ENCODE measurements at regions of chr9 and their contacts with region 1.

Region 1: DNA sequence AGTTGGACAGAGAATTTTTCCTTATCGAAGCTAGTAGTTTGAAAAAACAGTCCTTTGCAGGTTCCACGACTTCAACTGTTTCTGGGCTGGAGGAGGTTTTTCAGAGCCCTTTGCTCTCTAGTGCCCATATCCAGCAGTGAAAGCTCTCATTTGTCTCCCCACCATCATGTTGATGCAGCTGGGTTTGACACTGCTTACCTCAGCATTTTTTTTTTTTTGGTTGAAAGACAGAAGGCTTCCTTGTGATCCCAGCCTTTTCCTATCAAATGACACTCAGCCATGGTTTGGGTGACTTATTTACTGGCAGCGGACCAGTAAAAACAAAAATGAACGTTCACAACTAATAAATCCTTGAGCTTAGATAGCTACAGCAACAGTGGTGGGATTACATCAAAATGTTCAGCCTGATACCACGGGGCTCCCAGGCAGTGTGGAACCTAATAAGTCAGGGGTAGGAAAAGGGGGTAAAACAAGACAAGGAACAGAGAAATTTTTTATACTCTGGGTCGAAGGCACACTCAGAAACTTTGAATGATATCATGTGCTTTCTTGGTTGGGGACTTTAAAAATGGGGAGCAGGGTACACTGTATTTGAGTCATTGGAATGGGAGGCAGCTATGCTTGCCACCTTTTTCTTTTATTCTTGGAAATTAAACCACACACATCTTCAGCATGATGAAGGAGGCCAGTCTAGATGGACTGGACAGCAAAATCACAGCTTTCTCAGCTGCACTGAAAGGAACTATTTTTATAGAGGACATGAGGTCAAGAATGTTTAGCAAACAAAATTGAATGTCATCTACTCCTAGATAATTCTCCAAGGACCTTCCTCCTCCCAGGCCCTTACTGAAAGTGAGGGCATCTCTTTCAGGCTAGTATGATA is 308.9 kb upstream of the MPDZ start:
- DNase-seq: no peak
- ATAC-seq: peak; percentile 49
- H3K4me3 ChIP-seq: no peak overlapping the region
- H3K27ac ChIP-seq: no peak overlapping the region
- H3K4me1 ChIP-seq: peaks cover 0 to 3% of the 10 kb centered on the region in 2 donors
- H3K27me3 ChIP-seq: no peaks in the 10 kb centered on the region

Region 2: DNA sequence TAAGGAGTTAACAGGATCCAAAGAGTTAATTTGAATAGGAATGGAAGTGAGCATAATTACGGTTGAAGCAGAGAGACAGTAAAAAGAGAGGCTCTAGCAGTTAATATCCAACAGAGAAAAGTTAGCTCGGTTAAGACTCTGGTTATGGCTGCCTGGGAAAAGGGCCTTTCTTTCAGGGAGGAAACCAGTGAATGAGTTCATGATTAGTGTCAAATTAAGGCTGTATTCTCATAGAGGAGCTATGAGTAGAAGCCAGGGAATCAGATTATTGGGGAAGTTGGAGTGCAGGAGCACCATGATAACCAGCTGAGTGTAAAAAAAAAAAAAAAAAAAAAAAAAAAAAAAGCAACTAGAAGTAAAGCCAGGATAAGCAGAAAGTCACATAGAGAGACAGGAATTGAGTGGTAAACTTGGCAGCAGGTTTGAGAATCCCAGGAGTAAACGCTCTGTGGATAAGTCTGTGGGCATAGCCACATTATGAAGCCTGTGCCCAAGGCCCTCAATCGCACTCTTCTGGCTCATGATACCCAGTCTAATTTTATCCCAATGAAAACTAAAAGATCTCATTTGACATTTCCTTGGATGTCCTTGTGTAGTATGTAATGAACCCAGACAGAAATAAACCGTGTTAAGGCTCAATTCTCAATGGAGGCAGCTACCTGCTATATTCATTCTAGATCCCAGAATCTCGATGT is 63.7 kb after region 1 on chr9:
- intact Hi-C with region 1: loop called in 1 of 2 experiments (anchors 10 kb)
- DNase-seq: peak in 1 of 2 donors; percentile 54
- ATAC-seq: peak; percentile 83
- H3K4me3 ChIP-seq: no peak overlapping the region
- H3K27ac ChIP-seq: no peak overlapping the region
- H3K4me1 ChIP-seq: peaks cover 0 to 3% of the 10 kb centered on the region in 2 donors
- H3K27me3 ChIP-seq: no peaks in the 10 kb centered on the region